IMR-90 (cell line): ENCODE measurements at regions of chr11 and their contacts with region 1.

Region 1: DNA sequence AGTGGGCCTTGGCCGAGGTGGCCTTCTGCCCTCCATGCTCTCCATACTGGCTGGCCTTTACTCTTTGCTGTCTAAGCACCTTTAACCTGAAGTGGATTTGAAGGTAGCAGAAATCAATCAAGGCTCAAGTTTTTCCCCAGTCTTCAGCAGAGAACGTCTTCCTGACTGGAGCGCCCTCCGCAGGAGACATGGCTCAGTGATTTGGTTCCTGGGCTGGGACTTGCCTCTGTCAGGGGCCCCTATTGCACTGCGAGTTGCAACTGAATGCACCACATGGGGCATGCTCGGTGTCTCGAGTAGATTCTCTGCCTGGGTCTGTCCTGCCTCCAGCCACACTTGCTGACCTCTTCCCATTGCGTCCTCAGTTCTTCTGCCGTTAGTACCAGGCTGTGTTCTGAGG is 79.6 kb downstream of the BMAL1 start:
- DNase-seq: no peak
- ATAC-seq: no peak
- H3K4me3 ChIP-seq: no peak overlapping the region
- H3K27ac ChIP-seq: no peak overlapping the region
- H3K4me1 ChIP-seq: peaks cover 2% of the 10 kb centered on the region
- H3K27me3 ChIP-seq: no peaks in the 10 kb centered on the region
- CTCF ChIP-seq: no peak
- POLR2A ChIP-seq: no peak
- RAD21 ChIP-seq: no peak

Region 2: GRCh38 chr11:13448876-13449275 is 91.6 kb after region 1 on chr11:
- CTCF ChIA-PET with region 1: no interaction called
- POLR2A ChIA-PET with region 1: no interaction called
- dilution Hi-C with region 1: no loop called
- in situ Hi-C with region 1: no loop called
- intact Hi-C with region 1: loop called (anchors 1 kb)
- DNase-seq: peak; percentile 41
- ATAC-seq: peak; percentile 67
- H3K4me3 ChIP-seq: no peak overlapping the region
- H3K27ac ChIP-seq: no peak overlapping the region
- H3K4me1 ChIP-seq: peaks cover 2% of the 10 kb centered on the region
- H3K27me3 ChIP-seq: no peaks in the 10 kb centered on the region
- CTCF ChIP-seq: no peak
- POLR2A ChIP-seq: no peak
- RAD21 ChIP-seq: no peak

Region 3: GRCh38 chr11:13538044-13538443 is 180.8 kb after region 1 on chr11:
- CTCF ChIA-PET with region 1: no interaction called
- POLR2A ChIA-PET with region 1: no interaction called
- dilution Hi-C with region 1: no loop called
- in situ Hi-C with region 1: no loop called
- intact Hi-C with region 1: no loop called
- DNase-seq: no peak
- ATAC-seq: no peak
- H3K4me3 ChIP-seq: no peak overlapping the region
- H3K27ac ChIP-seq: no peak overlapping the region
- H3K4me1 ChIP-seq: no peaks in the 10 kb centered on the region
- H3K27me3 ChIP-seq: no peaks in the 10 kb centered on the region
- CTCF ChIP-seq: no peak
- POLR2A ChIP-seq: no peak
- RAD21 ChIP-seq: no peak

Region 4: GRCh38 chr11:13576995-13577394 is 219.8 kb after region 1 on chr11:
- CTCF ChIA-PET with region 1: no interaction called
- POLR2A ChIA-PET with region 1: no interaction called
- dilution Hi-C with region 1: no loop called
- in situ Hi-C with region 1: no loop called
- intact Hi-C with region 1: no loop called
- DNase-seq: no peak
- ATAC-seq: no peak
- H3K4me3 ChIP-seq: no peak overlapping the region
- H3K27ac ChIP-seq: no peak overlapping the region
- H3K4me1 ChIP-seq: no peaks in the 10 kb centered on the region
- H3K27me3 ChIP-seq: no peaks in the 10 kb centered on the region
- CTCF ChIP-seq: no peak
- POLR2A ChIP-seq: no peak
- RAD21 ChIP-seq: no peak